Ascending aorta (tissue), 2 donors: ENCODE measurements at regions of chr7 and their contacts with region 1.

Region 1: GRCh38 chr7:75966190-75966961 is 28.0 kb downstream of the TMEM120A start:
- DNase-seq: peak; percentile 63 to 92
- H3K4me3 ChIP-seq: peak overlapping the region; percentile 15 to 54
- H3K27ac ChIP-seq: peak overlapping the region; percentile 92 to 97
- H3K4me1 ChIP-seq: peaks cover 20 to 44% of the 10 kb centered on the region in 2 donors
- H3K27me3 ChIP-seq: no peaks in the 10 kb centered on the region
- CTCF ChIP-seq: no peak

Region 2: DNA sequence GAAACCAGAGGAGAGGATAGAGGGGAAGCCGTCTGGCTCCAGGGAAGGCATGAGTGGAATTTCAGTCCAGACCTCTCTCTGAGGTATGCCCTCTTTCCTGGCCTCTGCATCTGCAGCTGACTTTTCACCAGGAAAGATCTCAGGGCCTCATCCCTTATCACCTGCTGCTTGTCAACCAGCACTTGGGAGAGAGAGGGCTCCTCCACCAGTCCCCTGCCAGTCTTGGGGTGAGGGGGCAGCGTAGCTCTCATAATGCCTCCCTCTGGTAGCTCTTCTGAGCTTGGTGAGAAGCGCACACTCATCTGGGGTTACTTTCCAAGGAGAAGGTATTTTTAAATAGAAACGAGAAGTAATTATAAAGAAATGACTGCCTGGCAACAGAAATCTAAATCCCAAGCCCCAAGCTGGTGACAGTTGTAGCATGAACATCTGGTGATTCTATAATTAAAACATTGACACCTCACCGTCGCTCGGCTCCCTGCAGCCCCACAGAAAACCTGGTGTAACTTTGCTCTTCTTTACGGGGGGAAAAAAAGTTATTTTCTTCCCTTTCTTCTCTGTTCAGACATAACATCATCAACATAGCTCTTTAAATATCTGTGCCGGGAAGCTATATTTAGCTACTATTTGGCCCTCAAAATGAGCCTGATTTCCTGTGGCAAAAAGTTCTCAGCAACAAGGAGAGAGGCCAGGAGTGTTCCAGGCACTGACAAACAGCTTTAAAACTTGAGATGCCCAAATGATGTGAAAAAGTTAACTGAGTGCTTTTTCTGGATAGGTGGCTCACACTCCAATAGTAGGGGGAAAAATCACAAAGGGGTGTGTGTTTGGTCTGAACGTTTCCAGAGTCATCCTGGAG is 254.5 kb before region 1 on chr7:
- intact Hi-C with region 1: loop called (anchors 10 kb)
- DNase-seq: peak in 1 of 2 donors; percentile 74
- H3K4me3 ChIP-seq: peak overlapping the region; percentile 25 to 46
- H3K27ac ChIP-seq: peak overlapping the region; percentile 94 to 97
- H3K4me1 ChIP-seq: peaks cover 9 to 48% of the 10 kb centered on the region in 2 donors
- H3K27me3 ChIP-seq: no peaks in the 10 kb centered on the region
- CTCF ChIP-seq: peak in 1 of 3 experiments; percentile 5

Region 3: DNA sequence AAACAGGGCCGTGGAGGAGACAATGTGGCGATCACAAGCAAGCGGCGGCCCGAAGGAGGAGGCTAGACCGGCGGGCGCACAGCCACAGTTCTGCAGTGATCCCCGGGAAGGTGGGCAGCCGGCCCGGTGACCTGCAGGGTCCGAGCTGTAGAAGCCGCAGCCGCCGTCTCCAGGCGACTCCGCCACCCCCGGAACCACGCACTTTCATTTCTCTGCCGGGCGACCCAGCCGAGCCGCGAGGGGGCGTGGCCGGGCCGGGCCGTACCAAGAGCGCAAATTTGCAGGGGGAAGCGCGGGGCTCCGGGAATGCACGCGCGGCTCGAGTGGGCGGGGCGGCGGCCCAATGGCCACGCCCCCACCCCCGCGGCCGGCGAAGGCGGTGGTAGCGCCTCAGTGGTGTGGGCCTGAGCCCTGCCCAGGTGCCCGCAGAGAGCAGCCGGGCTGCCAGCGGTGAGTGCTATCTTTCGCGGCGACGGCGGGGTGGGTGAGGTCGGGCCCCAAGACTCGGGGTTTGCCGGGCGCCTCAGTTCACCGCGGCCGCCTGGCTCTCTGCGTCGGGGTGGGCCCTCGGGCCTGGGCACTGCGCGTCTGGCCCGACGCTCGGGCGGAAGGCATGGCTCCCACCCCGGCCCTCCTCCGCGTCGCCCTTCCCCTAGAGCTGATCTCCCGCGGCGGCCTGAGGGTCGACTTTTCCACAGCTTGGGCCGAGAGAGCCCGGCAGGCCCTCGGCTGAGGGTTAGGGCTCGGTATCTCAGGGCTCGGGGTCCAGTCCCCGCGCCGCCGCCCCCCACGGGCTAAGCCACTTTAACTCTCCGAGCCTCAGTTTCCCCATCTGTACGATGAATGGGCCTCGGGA is 51.4 kb before region 1 on chr7 and contains the start of gene POR:
- intact Hi-C with region 1: loop called (anchors 1 kb)
- DNase-seq: peak; percentile 80 to 96
- H3K4me3 ChIP-seq: peak within 1 kb of the TSS; percentile 81 to 84
- H3K27ac ChIP-seq: peak within 1 kb of the TSS; percentile 81 to 84
- H3K4me1 ChIP-seq: peaks cover 3 to 5% of the 10 kb centered on the region in 2 donors
- H3K27me3 ChIP-seq: no peaks in the 10 kb centered on the region
- CTCF ChIP-seq: peak in 2 of 3 experiments; percentile 3 to 11
- total RNA-seq, gene POR: 236 TPM

Region 4: DNA sequence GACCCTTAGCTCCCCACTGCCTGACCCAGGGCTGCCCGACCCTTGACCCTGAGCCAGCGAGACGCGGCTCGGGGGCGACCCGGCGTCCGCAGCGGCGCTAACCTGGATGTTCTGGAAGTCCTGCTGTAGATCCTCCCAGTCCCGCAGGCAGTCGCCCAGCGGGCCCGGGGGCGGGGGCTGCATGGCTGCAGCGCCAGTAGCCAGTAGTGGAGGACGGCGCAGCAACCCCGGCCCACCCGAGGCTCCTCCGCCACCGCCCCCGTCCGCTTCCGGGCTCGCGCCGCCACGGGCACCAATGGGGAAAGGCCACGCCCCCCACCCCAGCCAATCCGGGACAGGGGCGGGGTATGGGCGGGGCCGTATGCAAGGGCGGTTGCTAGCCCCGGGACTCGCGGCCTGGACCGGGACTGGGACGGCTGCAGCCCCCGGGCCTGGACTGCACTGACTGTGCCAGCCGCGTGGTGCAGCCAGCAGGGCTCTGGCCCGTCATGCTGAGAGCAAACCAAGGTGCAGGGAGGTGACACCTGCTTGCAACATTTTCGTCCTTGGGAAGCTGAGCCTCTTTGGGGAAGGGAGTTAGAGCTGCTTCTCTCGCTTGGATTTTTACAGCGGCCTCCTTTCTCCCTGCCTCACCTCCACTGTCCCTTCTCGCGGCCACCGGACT is 28.1 kb after region 1 on chr7 and contains the start of gene TMEM120A:
- intact Hi-C with region 1: loop called (anchors 1 kb)
- DNase-seq: peak; percentile 84 to 98
- H3K4me3 ChIP-seq: peak within 1 kb of the TSS; percentile 92 to 93
- H3K27ac ChIP-seq: peak within 1 kb of the TSS; percentile 99 to 100
- H3K4me1 ChIP-seq: peaks cover 10 to 25% of the 10 kb centered on the region in 2 donors
- H3K27me3 ChIP-seq: no peaks in the 10 kb centered on the region
- CTCF ChIP-seq: peak; percentile 29 to 42 (median 31)
- total RNA-seq, gene TMEM120A: 24.2 TPM

Region 5: GRCh38 chr7:76047811-76048667 is 81.7 kb after region 1 on chr7 and contains the starts of genes MDH2 and STYXL1:
- intact Hi-C with region 1: loop called (anchors 2 kb)
- DNase-seq: peak; percentile 88 to 98
- H3K4me3 ChIP-seq: peak within 1 kb of the TSS; percentile 93 to 99
- H3K27ac ChIP-seq: peak within 1 kb of the TSS; percentile 84 to 96
- H3K4me1 ChIP-seq: peaks cover 0 to 19% of the 10 kb centered on the region in 2 donors
- H3K27me3 ChIP-seq: no peaks in the 10 kb centered on the region
- CTCF ChIP-seq: no peak
- total RNA-seq, gene MDH2: 63.5 TPM
- total RNA-seq, gene STYXL1: 0.96 TPM

Region 6: GRCh38 chr7:76060842-76061241 is 94.5 kb after region 1 on chr7:
- intact Hi-C with region 1: no loop called
- DNase-seq: no peak
- H3K4me3 ChIP-seq: no peak overlapping the region
- H3K27ac ChIP-seq: no peak overlapping the region
- H3K4me1 ChIP-seq: no peaks in the 10 kb centered on the region
- H3K27me3 ChIP-seq: no peaks in the 10 kb centered on the region
- CTCF ChIP-seq: no peak